Activated T-helper 2 cell treated with anti-CD3 and anti-CD28 coated beads, Interferon-gamma antibody, Interleukin-2, Interleukin-4, amounts not matched to agents 10 μg/mL and 5 μg/mL and 100 μg/mL, durations not matched to agents 14 hours and 24 hours and 36 hours (primary cell): ENCODE measurements at regions of chr11 and their contacts with region 1.

Region 1: DNA sequence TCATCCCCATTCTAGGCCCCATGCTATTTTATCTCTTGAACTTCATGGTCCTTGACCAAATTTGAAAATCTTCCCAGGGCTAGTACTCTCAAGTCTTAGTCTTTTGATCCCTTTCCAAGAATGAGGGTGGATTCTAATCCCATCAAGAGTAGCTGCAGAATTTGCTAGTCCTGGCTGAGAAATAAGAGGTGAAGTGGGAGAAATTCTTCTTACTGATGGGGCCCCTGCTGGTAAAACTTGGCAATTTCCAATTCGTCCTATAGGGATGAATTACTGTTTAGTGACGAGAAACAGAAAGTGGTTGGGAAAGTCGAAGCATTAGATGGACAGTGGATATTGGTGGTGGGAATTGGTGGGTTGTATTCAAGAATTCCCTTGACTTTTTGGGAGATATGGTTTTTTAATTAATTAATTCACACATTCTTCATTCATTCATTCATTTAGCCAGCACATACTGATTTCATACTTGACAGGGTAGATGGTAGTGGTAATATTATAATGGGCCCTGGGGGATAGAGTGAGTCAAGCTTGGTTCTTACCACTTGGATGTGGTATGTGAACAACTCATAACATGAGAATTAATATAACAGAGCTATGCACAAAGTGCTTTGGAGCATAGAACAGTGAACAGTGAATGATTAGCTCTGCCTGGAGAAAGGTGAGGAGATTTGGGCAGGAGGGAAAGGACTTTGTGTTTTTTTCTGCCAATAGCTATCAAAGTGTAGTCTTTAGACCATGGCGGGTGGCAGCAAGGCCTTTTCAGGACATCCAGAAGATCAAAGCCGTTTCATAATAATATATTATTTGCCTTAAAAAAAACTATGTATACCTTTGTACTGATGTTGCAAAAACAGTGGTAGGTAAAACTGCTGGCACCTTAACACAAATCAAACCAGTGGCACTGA is 103.8 kb downstream of the STIM1 start:
- DNase-seq: no peak
- H3K4me3 Mint-ChIP-seq: no peak overlapping the region
- H3K27ac Mint-ChIP-seq: peak overlapping the region; percentile 39
- H3K4me1 Mint-ChIP-seq: peaks cover 57% of the 10 kb centered on the region
- H3K27me3 Mint-ChIP-seq: no peaks in the 10 kb centered on the region

Region 2: DNA sequence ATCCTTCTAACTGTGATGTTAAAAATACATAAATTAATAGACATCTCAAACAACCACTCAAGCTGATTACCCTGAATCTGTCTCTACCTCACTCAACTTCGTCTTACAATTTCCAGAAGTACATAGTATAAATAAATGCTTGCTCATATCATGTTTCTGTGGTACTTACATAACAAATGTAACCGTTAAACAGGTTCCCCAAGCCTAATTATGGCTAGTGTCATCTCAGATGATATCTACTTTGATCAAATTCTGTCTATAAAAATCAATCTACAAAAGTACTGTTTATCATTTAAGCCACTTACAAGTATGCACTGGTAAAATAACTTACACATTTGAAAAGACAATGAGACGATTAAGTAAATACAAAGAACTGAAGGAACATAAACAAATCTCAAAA is 259.9 kb before region 1 on chr11:
- intact Hi-C with region 1: no loop called
- DNase-seq: no peak
- H3K4me3 Mint-ChIP-seq: no peak overlapping the region
- H3K27ac Mint-ChIP-seq: peak overlapping the region; percentile 30
- H3K4me1 Mint-ChIP-seq: peaks cover 2% of the 10 kb centered on the region
- H3K27me3 Mint-ChIP-seq: no peaks in the 10 kb centered on the region

Region 3: GRCh38 chr11:3969613-3970012 is 10.3 kb after region 1 on chr11:
- intact Hi-C with region 1: loop called (anchors 2 kb)
- DNase-seq: no peak
- H3K4me3 Mint-ChIP-seq: peak overlapping the region; percentile 48
- H3K27ac Mint-ChIP-seq: peak overlapping the region; percentile 88
- H3K4me1 Mint-ChIP-seq: peaks cover 52% of the 10 kb centered on the region
- H3K27me3 Mint-ChIP-seq: no peaks in the 10 kb centered on the region

Region 4: GRCh38 chr11:3984896-3985295 is 25.6 kb after region 1 on chr11:
- intact Hi-C with region 1: loop called (anchors 2 kb)
- DNase-seq: no peak
- H3K4me3 Mint-ChIP-seq: no peak overlapping the region
- H3K27ac Mint-ChIP-seq: peak overlapping the region; percentile 73
- H3K4me1 Mint-ChIP-seq: peaks cover 54% of the 10 kb centered on the region
- H3K27me3 Mint-ChIP-seq: no peaks in the 10 kb centered on the region